Right cardiac atrium (tissue), 5 donors: ENCODE measurements at regions of chr7 and their contacts with region 1.

Region 1: GRCh38 chr7:46035166-46035565 is 114.1 kb upstream of the IGFBP3 start:
- DNase-seq: peak in 1 of 3 donors; percentile 12
- ATAC-seq: no peak
- H3K4me3 ChIP-seq: no peak overlapping the region
- H3K27ac ChIP-seq: no peak overlapping the region
- H3K4me1 ChIP-seq: peaks cover 10% of the 10 kb centered on the region
- H3K27me3 ChIP-seq: no peaks in the 10 kb centered on the region

Region 2: GRCh38 chr7:45599851-45600706 is 435.1 kb before region 1 on chr7:
- intact Hi-C with region 1: no loop called
- DNase-seq: no peak
- ATAC-seq: peak; percentile 39 to 48
- H3K4me3 ChIP-seq: no peak overlapping the region
- H3K27ac ChIP-seq: no peak overlapping the region
- H3K4me1 ChIP-seq: no peaks in the 10 kb centered on the region
- H3K27me3 ChIP-seq: no peaks in the 10 kb centered on the region

Region 3: DNA sequence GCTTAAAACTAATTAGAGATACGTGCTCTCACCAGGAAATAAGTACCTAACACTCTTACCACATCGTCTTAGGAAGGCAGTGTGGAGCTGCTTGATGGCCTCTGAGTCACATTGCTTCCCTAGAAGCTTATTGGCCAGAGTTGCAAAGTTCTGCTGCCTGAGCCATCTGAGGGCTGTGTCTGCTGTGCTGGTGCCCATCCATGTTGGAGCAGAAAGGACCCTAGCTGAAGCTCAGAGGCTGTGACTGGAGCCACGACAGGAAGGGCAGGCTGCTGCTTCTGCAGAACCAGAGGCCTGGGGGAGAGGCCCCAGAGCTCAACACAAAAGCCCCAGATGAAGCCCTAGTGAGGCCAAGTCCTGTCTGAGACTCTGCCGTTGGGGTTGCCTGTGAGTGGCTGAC is 49.3 kb before region 1 on chr7:
- intact Hi-C with region 1: loop called in 1 of 4 experiments (anchors 5 kb)
- DNase-seq: no peak
- ATAC-seq: peak in 1 of 2 donors; percentile 39
- H3K4me3 ChIP-seq: no peak overlapping the region
- H3K27ac ChIP-seq: no peak overlapping the region
- H3K4me1 ChIP-seq: peaks cover 4% of the 10 kb centered on the region
- H3K27me3 ChIP-seq: no peaks in the 10 kb centered on the region